ENCODE measurements at regions of chr4 and their contacts with region 1.

Region 1: GRCh38 chr4:83217721-83218522 is 66.7 kb downstream of the COQ2 start:
- DNase-seq: no peak
- ATAC-seq: peak; percentile 90
- H3K4me3 Mint-ChIP-seq: peak overlapping the region; percentile 79
- H3K27ac Mint-ChIP-seq: peak overlapping the region; percentile 89
- H3K4me1 Mint-ChIP-seq: peaks cover 76% of the 10 kb centered on the region
- H3K27me3 Mint-ChIP-seq: no peaks in the 10 kb centered on the region

Region 2: DNA sequence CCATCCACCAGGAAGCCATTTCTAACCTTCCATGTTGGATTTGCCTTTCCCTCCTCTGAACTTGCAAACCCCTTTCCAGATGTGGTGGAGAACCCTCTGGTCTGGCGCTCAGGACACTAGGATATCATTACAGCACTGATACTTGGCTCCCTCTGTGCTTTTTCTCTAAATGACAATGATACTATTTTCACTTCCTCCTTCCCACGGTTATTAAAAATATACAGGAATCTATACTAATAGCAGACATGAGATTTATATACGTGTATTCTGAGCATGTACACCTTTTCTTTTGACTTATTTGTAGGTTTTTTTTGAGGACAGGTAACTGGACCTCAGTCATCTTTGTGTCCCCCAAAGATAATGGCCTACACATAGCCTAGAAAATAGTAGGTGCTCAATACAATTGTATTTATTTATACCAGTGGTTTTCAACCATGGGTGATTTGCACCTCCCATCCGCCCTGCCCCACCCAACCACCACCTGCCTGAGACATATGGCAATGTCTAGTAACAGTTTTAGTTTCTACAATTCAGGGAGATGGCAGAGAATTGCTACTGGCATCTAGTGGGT is 43.0 kb before region 1 on chr4:
- POLR2A ChIA-PET with region 1: no interaction called
- DNase-seq: no peak
- ATAC-seq: no peak
- H3K4me3 Mint-ChIP-seq: no peak overlapping the region
- H3K27ac Mint-ChIP-seq: no peak overlapping the region
- H3K4me1 Mint-ChIP-seq: peaks cover 11% of the 10 kb centered on the region
- H3K27me3 Mint-ChIP-seq: no peaks in the 10 kb centered on the region

Region 3: DNA sequence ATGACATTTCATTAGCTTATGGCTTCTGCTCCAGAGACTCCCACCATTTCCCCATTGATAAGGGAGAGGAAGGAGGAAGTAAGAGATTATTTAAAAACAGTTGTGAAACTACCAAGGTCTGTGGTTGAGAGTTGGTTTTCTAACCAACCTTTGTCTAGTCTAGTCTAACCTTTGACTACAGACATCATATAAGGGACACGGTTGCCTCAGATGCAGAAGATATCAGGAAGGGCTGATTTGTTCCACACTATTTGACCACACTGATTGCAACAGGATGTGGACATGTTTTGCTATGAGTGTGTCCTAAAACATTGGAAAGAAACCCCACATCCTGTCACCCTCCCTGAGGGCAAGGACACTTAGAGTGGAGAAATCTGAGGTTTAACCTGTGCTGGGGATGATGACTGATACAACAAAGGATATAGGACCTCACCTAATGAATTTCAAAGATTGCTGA is 13.7 kb after region 1 on chr4:
- POLR2A ChIA-PET with region 1: interaction called, 28 read pairs
- DNase-seq: no peak
- ATAC-seq: peak; percentile 85
- H3K4me3 Mint-ChIP-seq: peak overlapping the region; percentile 68
- H3K27ac Mint-ChIP-seq: peak overlapping the region; percentile 85
- H3K4me1 Mint-ChIP-seq: peaks cover 61% of the 10 kb centered on the region
- H3K27me3 Mint-ChIP-seq: no peaks in the 10 kb centered on the region

Region 4: DNA sequence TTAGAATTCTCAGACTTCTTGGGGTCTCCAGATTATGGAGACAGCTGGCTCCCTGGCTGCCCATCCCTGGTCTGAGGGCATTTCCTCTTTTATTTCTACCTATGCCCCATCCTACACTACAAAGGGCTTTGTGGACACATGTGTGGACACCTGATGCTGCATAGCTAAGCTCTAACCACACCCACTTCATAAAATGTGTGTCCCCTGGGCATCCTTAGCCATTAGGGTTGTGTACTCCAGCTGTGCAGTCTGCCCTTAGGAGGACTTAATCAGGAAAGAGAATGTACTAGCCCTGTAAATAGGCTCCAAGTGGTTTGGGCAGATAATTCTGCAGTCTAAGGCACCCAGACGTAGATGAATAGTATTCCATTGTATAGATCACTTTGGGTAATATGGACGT is 19.7 kb after region 1 on chr4:
- POLR2A ChIA-PET with region 1: interaction called, 28 read pairs
- DNase-seq: no peak
- ATAC-seq: no peak
- H3K4me3 Mint-ChIP-seq: no peak overlapping the region
- H3K27ac Mint-ChIP-seq: no peak overlapping the region
- H3K4me1 Mint-ChIP-seq: peaks cover 64% of the 10 kb centered on the region
- H3K27me3 Mint-ChIP-seq: no peaks in the 10 kb centered on the region

Region 5: DNA sequence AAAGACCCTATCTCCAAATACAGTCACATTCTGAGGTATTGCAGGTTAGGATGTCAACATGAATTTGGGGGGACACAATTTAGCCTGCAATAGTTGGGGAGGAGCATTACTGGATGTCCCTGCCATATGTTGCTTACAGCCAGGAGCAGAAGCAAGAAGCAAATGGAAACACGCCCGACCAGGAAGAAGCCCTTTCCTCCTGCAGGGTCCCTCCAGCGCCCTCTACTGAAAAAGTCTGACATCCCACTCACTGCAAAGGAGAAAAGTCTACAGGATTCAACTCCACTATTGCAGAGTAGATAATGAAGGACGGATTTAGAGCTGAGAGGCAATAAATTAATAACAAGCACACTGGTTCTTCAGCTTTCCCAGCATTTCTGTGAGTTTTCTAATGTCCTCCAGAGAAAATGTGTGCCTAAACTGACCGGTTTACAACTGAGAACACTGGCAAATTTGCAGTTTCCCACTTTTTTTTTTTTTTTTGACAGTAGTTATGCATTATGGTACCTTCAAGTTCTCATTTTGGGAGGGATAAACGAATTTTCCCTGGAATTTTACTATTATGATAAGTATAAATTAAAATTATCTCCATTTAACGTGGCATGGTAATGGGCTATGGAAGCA is 35.0 kb after region 1 on chr4:
- POLR2A ChIA-PET with region 1: interaction called, 18 read pairs
- DNase-seq: peak; percentile 53
- ATAC-seq: peak; percentile 93
- H3K4me3 Mint-ChIP-seq: no peak overlapping the region
- H3K27ac Mint-ChIP-seq: peak overlapping the region; percentile 70
- H3K4me1 Mint-ChIP-seq: peaks cover 33% of the 10 kb centered on the region
- H3K27me3 Mint-ChIP-seq: no peaks in the 10 kb centered on the region

Region 6: GRCh38 chr4:83387753-83388676 is 170.1 kb after region 1 on chr4:
- POLR2A ChIA-PET with region 1: no interaction called
- DNase-seq: no peak
- ATAC-seq: peak; percentile 98
- H3K4me3 Mint-ChIP-seq: peak overlapping the region; percentile 31
- H3K27ac Mint-ChIP-seq: peak overlapping the region; percentile 75
- H3K4me1 Mint-ChIP-seq: peaks cover 9% of the 10 kb centered on the region
- H3K27me3 Mint-ChIP-seq: peaks cover 6% of the 10 kb centered on the region